Dendritic cell treated with granulocyte-macrophage colony-stimulating factor and Interleukin-4, amounts not matched to agents 40 ng/mL and 50 ng/mL, for 4 days (primary cell): ENCODE measurements at regions of chr1 and their contacts with region 1.

Region 1: DNA sequence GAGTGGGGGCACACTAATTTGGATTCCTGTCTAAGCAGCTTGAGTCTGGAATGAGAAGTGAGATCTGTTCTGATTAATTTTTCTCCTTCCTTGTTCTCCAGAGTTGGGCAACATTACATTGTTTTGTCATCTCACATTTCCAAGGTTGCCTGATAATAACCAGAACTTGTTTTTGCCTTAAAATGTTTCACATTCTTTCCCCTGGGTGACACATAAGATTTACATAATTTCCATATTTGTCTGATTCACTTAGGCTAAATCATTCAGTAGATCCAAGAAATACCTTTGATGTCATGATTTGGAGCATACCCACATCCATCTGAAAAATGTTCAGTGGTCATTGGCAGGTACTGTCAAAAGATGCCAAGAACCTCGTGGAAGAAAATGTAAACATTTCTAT is 60.3 kb downstream of the XCL2 start:
- H3K4me3 Mint-ChIP-seq: no peak overlapping the region
- H3K27ac Mint-ChIP-seq: peak overlapping the region; percentile 22
- H3K4me1 Mint-ChIP-seq: peaks cover 32% of the 10 kb centered on the region
- H3K27me3 Mint-ChIP-seq: no peaks in the 10 kb centered on the region

Region 2: DNA sequence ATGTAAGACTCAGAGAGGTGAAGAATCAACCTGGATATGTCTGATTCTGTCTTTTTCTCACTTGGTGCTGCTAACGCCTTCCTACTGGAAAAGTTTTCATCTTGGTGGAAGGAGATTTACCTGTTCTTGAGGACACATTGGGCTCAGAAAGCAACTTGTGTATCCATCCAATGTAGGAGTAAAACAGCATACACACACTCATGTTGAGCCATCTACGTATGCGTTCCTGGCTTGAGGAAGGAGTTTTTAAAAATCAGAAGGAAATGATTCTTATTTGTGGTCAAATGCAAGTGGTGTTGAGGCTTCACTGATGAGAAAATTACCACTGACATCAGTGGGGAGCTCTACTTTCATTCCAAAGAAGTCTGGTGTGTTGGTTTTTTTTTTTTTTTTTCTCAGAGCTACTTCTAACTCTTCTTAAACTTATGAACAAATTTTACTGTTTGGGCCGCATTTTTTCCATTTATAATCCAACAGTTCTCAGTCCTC is 34.7 kb after region 1 on chr1:
- intact Hi-C with region 1: loop called (anchors 5 kb)
- H3K4me3 Mint-ChIP-seq: no peak overlapping the region
- H3K27ac Mint-ChIP-seq: no peak overlapping the region
- H3K4me1 Mint-ChIP-seq: peaks cover 59% of the 10 kb centered on the region
- H3K27me3 Mint-ChIP-seq: no peaks in the 10 kb centered on the region